Endothelial cell of umbilical vein (primary cell): ENCODE measurements at regions of chr3 and their contacts with region 1.

Region 1: GRCh38 chr3:112531358-112531781 is 30.4 kb downstream of the ATG3 start:
- DNase-seq: peak; percentile 53
- H3K4me3 ChIP-seq: no peak overlapping the region
- H3K27ac ChIP-seq: no peak overlapping the region
- H3K4me1 ChIP-seq: no peaks in the 10 kb centered on the region
- H3K27me3 ChIP-seq: no peaks in the 10 kb centered on the region
- CTCF ChIP-seq: no peak
- POLR2A ChIP-seq: no peak

Region 2: DNA sequence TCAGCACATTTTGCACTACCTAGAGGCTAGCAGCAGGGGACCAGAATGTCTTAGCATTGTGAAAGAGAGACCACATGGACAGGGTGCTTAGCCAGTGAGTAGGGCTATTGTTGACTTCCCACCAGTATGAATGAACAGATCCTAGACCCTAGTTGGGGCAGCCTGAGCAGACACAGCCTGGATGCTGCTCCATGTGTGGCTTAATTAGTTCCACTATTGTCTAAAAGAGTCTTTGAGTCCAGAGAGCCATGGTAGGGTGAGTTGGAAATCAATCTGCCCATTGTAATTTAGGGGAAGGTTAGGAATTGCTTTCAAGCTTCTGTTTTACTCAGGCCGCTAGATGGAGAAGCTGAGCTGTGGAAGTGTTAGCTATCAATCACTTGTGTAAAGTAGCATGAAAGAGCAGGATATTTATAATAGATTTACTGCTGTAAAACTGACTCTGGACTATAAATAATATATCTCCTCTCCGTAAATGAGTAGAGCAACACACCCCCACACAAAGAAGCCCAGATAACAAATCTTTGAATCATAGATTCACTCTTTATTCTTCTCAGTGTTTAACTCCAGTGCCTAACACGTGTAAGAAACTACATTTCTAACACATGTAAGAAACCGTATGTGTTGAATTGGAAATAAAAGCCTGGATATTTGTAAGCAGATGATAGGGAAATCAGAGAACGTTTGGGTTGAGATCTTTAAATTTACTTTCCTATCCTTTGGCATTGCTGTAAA is 394.2 kb before region 1 on chr3:
- CTCF ChIA-PET with region 1: interaction called, 7 read pairs
- POLR2A ChIA-PET with region 1: no interaction called
- dilution Hi-C with region 1: no loop called
- intact Hi-C with region 1: loop called (anchors 2 kb)
- DNase-seq: peak; percentile 57
- H3K4me3 ChIP-seq: no peak overlapping the region
- H3K27ac ChIP-seq: no peak overlapping the region
- H3K4me1 ChIP-seq: no peaks in the 10 kb centered on the region
- H3K27me3 ChIP-seq: peaks cover 3 to 5% of the 10 kb centered on the region in 2 experiments
- CTCF ChIP-seq: peak; percentile 45 to 54
- POLR2A ChIP-seq: no peak

Region 3: DNA sequence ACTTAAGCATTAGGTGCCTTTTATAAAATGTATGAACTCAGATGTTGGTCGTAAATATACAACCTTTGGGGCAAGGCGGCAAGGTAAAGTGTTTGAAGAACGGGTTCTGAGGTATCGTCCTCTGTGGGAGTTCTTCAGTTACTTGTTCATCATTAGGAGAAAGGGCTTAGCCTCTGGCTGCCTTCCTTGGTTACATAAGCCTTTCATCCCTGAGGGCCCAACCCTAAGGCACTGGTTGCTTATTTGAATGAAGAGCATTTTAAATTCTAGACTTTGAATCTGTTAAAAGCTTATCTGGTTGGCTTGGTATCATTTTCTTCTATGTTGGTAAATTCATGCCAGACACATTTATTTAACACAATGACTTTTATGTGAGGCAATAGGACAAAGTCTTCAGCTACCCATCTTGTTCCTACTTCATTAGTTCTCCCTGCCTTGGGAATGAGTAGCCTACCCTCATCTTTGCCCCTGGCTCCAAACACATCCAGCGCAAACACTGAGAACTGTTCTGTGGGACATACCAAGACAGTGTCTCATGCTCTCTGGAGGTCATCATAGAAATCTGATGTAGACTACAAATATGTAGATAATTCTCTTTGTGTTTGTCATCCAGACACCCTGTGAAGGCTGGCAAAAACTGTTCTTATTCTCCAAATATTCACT is 122.0 kb after region 1 on chr3:
- CTCF ChIA-PET with region 1: no interaction called
- POLR2A ChIA-PET with region 1: no interaction called
- dilution Hi-C with region 1: no loop called
- intact Hi-C with region 1: no loop called
- DNase-seq: no peak
- H3K4me3 ChIP-seq: no peak overlapping the region
- H3K27ac ChIP-seq: no peak overlapping the region
- H3K4me1 ChIP-seq: no peaks in the 10 kb centered on the region
- H3K27me3 ChIP-seq: no peaks in the 10 kb centered on the region
- CTCF ChIP-seq: no peak
- POLR2A ChIP-seq: no peak